Heart right ventricle (tissue), 16 donors: ENCODE measurements at regions of chr1 and their contacts with region 1.

Region 1: GRCh38 chr1:201559679-201560162 is 20.8 kb downstream of the NAV1 start:
- DNase-seq: peak; percentile 80 to 83
- ATAC-seq: peak; percentile 79 to 84 (median 82)
- H3K4me3 ChIP-seq: no peak overlapping the region
- H3K27ac ChIP-seq: peak overlapping the region in 6 of 10 donors; percentile 5 to 87 (median 46)
- H3K4me1 ChIP-seq: peaks cover 9 to 100% (median 84%) of the 10 kb centered on the region in 9 donors
- H3K27me3 ChIP-seq: no peaks in the 10 kb centered on the region
- CTCF ChIP-seq: peak; percentile 81 to 96 (median 93)

Region 2: DNA sequence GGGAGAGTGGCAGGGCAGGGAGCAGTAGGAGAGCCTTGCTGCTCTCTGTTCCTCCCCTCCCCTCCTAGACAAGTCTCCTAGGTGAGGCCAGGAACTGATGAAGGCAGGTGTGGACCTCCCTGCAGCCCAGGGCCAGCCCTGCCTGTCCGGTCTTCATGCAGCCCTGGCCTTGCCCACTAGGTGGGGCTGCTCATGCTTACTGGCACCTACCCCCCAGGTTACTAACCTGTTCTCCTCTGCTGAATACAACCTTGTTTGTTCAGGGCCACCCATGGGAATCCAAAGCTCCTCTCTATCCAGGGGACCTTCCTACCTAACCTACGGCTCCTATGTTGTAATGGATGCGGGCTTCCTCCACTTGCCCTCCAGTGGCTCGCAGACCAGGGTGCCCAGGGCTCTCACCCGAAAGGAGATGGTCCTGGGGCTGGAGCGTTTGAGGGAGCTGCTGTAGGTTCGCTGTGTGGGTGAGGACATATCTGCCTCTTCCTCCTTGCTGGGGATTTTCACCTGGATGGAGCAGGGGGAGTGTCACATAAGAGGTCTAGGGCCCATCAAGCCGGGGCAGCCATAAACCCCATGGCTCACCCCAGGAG is 174.3 kb before region 1 on chr1:
- intact Hi-C with region 1: no loop called
- DNase-seq: peak in 1 of 2 donors; percentile 63
- ATAC-seq: peak; percentile 38 to 83 (median 67)
- H3K4me3 ChIP-seq: no peak overlapping the region
- H3K27ac ChIP-seq: peak overlapping the region in 4 of 10 donors; percentile 60 to 81 (median 70)
- H3K4me1 ChIP-seq: peaks cover 0 to 52% (median 12%) of the 10 kb centered on the region in 9 donors
- H3K27me3 ChIP-seq: peaks cover 0 to 4% (median 0%) of the 10 kb centered on the region in 7 donors
- CTCF ChIP-seq: peak; percentile 49 to 83 (median 76)

Region 3: DNA sequence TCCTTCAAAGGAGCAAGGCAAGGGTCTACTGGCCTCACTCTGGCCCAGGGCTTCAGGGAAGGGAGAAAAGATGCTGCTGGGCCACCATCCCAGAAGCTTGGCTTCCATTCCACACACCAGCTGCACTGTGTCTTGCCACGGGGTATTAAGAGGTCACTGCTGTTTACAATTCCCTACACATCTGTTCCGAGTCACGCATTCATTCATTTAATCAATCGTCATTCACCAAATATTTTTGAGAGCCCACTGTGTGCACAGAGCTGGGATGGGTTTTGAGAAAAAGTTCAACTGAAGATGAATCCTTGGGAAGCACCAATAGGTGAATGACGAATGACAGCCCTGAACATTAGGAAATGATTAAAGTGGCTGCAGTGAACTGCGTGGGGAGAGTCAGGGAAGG is 80.9 kb after region 1 on chr1:
- intact Hi-C with region 1: loop called in 3 of 10 experiments (anchors 5 to 10 kb)
- DNase-seq: peak; percentile 51 to 67
- ATAC-seq: peak in 7 of 8 donors; percentile 50 to 77 (median 76)
- H3K4me3 ChIP-seq: no peak overlapping the region
- H3K27ac ChIP-seq: peak overlapping the region; percentile 16 to 80 (median 68)
- H3K4me1 ChIP-seq: peaks cover 27 to 70% (median 50%) of the 10 kb centered on the region in 9 donors
- H3K27me3 ChIP-seq: no peaks in the 10 kb centered on the region
- CTCF ChIP-seq: no peak

Region 4: DNA sequence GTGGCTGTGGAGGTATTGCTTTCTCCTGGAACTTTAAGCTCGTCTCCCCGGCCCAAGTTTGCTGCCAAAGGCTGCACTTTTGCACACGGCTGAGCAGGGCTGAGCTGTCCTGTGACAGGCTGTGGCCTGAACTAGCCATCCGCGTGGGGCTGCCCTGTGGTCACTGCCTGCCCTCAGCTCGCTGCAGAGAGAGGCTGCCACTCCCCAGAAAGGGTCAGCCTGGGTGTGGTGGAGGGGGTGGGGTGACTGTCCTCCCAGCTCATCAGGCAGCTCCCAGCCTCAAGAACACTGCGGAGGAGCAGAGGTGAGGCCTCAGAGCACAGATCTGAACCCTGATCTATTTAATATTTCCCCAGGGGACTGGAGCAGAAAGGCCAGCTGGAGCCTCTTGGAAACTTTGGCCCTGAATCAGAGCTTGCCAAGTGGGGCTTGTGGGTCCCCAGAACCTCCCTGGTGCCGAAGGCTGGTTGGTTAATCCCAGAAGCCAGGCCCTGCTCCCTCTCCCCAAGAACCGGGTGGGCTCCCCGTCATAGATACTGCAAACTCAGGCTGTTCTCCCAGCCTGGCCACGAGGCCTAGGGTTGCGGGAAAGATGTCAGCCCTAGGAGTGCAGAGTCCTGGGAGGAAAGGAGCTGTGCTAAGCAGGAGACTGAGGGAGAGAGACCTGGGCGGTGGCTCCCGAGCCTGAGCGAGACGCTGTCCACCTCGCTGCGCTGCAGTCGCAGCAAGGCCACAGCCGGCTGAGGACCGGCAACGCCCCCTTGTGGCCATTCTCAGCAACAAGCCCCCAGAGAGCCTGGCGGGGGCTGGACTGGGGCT is 144.1 kb after region 1 on chr1:
- intact Hi-C with region 1: loop called (anchors 1 to 2 kb)
- DNase-seq: peak; percentile 85 to 90
- ATAC-seq: peak; percentile 89 to 94 (median 90)
- H3K4me3 ChIP-seq: no peak overlapping the region
- H3K27ac ChIP-seq: peak overlapping the region in 9 of 10 donors; percentile 20 to 81 (median 54)
- H3K4me1 ChIP-seq: peaks cover 13 to 46% (median 26%) of the 10 kb centered on the region in 9 donors
- H3K27me3 ChIP-seq: no peaks in the 10 kb centered on the region
- CTCF ChIP-seq: peak; percentile 93 to 99 (median 98)

Region 5: DNA sequence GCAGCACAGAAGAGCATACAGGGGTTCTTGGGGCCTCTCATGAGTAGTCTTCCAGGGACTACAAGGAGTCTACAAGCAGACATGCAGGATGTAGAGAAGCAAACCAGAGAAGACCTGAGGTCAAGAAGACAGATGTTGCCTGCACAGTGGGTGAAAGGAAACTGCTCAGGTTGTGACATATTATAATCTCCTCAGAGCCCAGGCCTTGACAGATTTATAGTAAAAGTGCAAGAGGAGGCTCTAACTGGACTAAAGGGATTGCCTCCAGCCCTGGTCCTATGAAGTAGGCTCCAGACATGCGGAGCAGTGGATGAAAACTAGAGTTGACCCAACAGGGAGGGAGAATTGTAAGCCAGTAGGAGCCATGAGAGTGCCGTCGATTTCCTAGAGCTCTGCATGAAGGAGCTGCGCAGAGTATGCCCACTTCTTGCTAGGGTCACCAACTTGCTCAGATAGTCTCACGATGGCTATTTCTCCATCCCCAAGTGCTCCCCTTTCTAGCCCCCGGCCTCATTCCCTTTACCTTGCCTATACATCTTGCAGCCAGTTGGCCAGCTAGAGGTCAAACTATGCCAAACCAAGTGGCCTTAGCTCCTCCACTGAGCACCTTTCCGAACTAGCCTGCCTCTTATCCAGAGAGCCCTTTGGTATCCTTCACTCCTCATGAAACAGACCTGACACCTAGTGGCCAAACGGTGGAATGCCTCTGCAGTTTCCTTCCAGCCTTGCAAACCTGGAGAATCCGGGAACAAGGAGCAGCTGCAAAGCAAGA is 233.0 kb after region 1 on chr1:
- intact Hi-C with region 1: loop called in 9 of 10 experiments (anchors 1 to 5 kb)
- DNase-seq: peak; percentile 56 to 86
- ATAC-seq: peak; percentile 79 to 87 (median 80)
- H3K4me3 ChIP-seq: no peak overlapping the region
- H3K27ac ChIP-seq: peak overlapping the region; percentile 53 to 94 (median 82)
- H3K4me1 ChIP-seq: peaks cover 41 to 74% (median 56%) of the 10 kb centered on the region in 9 donors
- H3K27me3 ChIP-seq: no peaks in the 10 kb centered on the region
- CTCF ChIP-seq: peak; percentile 93 to 97 (median 96)